H1 (cell line): ENCODE measurements at regions of chr1 and their contacts with region 1.

Region 1: DNA sequence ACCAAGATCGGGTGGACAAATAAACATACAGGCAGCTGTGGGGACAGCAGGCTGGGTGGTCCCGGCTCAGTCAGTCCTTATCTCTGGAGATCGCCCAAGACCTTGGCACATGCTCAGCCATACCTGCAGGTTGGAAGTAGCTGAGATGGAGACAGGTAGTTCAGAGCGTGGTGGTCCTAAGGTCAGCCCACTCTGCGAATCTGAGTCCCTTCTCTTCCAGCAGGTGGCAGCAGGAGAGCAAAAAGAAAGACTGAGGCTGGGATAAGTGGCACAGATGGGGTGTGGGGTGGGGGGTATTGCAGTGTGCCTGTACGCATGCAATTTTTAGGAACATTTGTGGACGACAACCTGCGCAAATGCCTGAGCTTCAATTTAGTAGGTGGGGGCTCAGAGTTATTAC is 104.9 kb downstream of the TENT5C start:
- DNase-seq: peak in 1 of 2 experiments; percentile 54
- H3K4me3 ChIP-seq: no peak overlapping the region
- H3K27ac ChIP-seq: no peak overlapping the region
- H3K4me1 ChIP-seq: peaks cover 6 to 12% (median 9%) of the 10 kb centered on the region in 4 experiments
- H3K27me3 ChIP-seq: no peaks in the 10 kb centered on the region; a peak in 1 of 7 replicates
- CTCF ChIP-seq: peak; percentile 66 to 81 (median 67)
- EP300 ChIP-seq: no peak
- POLR2A ChIP-seq: no peak
- RAD21 ChIP-seq: peak; percentile 60 to 73

Region 2: GRCh38 chr1:117685936-117686806 is 24.5 kb before region 1 on chr1:
- CTCF ChIA-PET with region 1: interaction called, 20 read pairs
- POLR2A ChIA-PET with region 1: no interaction called
- DNase-seq: no peak
- H3K4me3 ChIP-seq: no peak overlapping the region
- H3K27ac ChIP-seq: no peak overlapping the region
- H3K4me1 ChIP-seq: no peaks in the 10 kb centered on the region
- H3K27me3 ChIP-seq: no peaks in the 10 kb centered on the region
- CTCF ChIP-seq: peak; percentile 9 to 34 (median 27); a peak in 2 of 4 replicates
- EP300 ChIP-seq: no peak
- POLR2A ChIP-seq: no peak
- RAD21 ChIP-seq: peak; percentile 33 to 37; a peak in 3 of 4 replicates

Region 3: GRCh38 chr1:117695796-117696490 is 14.8 kb before region 1 on chr1:
- CTCF ChIA-PET with region 1: interaction called, 67 read pairs
- POLR2A ChIA-PET with region 1: interaction called, 4 read pairs
- DNase-seq: no peak
- H3K4me3 ChIP-seq: no peak overlapping the region
- H3K27ac ChIP-seq: no peak overlapping the region
- H3K4me1 ChIP-seq: no peaks in the 10 kb centered on the region
- H3K27me3 ChIP-seq: no peaks in the 10 kb centered on the region
- CTCF ChIP-seq: no peak
- EP300 ChIP-seq: no peak
- POLR2A ChIP-seq: no peak
- RAD21 ChIP-seq: no peak